Prostate gland (tissue), 2 donors: ENCODE measurements at regions of chr20 and their contacts with region 1.

Region 1: GRCh38 chr20:35463455-35464300 is 8.3 kb downstream of the CEP250 start:
- DNase-seq: peak; percentile 61
- H3K4me3 ChIP-seq: no peak overlapping the region
- H3K27ac ChIP-seq: no peak overlapping the region
- H3K4me1 ChIP-seq: no peaks in the 10 kb centered on the region
- H3K27me3 ChIP-seq: no peaks in the 10 kb centered on the region
- CTCF ChIP-seq: peak; percentile 24 to 78 (median 72)
- POLR2A ChIP-seq: no peak

Region 2: GRCh38 chr20:35541783-35542588 is 78.3 kb after region 1 on chr20 and contains the start of gene ERGIC3:
- intact Hi-C with region 1: loop called (anchors 10 kb)
- DNase-seq: peak; percentile 95
- H3K4me3 ChIP-seq: peak within 1 kb of the TSS; percentile 62 to 91
- H3K27ac ChIP-seq: peak within 1 kb of the TSS; percentile 63 to 70
- H3K4me1 ChIP-seq: peaks cover 6% of the 10 kb centered on the region
- H3K27me3 ChIP-seq: no peaks in the 10 kb centered on the region
- CTCF ChIP-seq: peak in 3 of 4 experiments; percentile 16 to 32 (median 25)
- POLR2A ChIP-seq: peak; percentile 50
- total RNA-seq, gene ERGIC3: 277 to 282 TPM

Region 3: DNA sequence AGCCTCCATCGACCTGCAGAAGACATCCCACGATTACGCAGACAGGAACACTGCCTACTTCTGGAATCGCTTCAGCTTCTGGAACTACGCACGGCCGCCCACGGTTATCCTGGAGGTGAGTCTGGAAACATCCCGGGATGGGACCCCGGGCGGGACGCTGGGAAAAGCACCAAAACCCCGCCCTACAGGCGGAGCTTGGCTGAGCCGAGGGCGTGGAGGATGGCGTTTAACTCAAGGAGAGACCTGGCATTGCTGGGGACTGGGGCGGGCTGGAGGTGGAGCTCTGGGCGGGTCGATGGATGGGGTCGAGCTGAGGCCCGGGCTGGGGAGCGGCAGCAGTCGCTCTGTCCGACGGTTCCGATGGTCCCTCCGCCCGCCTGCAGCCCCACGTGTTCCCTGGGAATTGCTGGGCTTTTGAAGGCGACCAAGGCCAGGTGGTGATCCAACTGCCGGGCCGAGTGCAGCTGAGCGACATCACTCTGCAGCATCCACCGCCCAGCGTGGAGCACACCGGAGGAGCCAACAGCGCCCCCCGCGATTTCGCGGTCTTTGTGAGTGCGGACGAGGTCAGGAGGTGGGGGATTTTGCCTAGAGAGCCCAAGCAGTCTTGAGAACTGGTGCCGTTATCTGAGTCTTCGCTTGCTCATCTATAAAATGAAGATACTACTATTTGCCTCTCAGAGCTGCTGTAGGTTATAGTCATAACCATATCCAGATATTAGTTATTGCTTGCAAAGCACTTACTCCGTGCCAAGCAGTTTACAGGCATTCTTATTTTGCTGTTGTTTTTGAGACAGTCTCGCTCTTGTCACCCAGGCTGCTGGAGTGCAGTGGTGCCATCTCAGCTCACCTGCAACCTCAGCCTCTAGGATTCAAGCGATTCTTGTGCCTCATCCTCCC is 155.8 kb after region 1 on chr20:
- intact Hi-C with region 1: loop called (anchors 10 kb)
- DNase-seq: peak; percentile 66
- H3K4me3 ChIP-seq: peak overlapping the region; percentile 29 to 36
- H3K27ac ChIP-seq: peak overlapping the region in 1 of 2 donors; percentile 10
- H3K4me1 ChIP-seq: peaks cover 9% of the 10 kb centered on the region
- H3K27me3 ChIP-seq: no peaks in the 10 kb centered on the region
- CTCF ChIP-seq: peak in 2 of 4 experiments; percentile 6 to 13
- POLR2A ChIP-seq: peak; percentile 45

Region 4: GRCh38 chr20:35699127-35699975 is 235.7 kb after region 1 on chr20 and contains the starts of genes NFS1 and ROMO1:
- intact Hi-C with region 1: loop called (anchors 10 kb)
- DNase-seq: peak; percentile 77
- H3K4me3 ChIP-seq: peak within 1 kb of the TSS; percentile 78 to 92
- H3K27ac ChIP-seq: peak within 1 kb of the TSS; percentile 84 to 85
- H3K4me1 ChIP-seq: no peaks in the 10 kb centered on the region
- H3K27me3 ChIP-seq: no peaks in the 10 kb centered on the region
- CTCF ChIP-seq: peak in 3 of 4 experiments; percentile 22 to 37 (median 34)
- POLR2A ChIP-seq: no peak
- total RNA-seq, gene NFS1: 41.2 to 56.7 TPM
- total RNA-seq, gene ROMO1: 249 to 320 TPM